Motor neuron (in vitro differentiated cells): ENCODE measurements at regions of chr6 and their contacts with region 1.

Region 1: GRCh38 chr6:106979427-106979884 is 4.9 kb upstream of the CD24 start:
- ATAC-seq: peak in 5 of 8 experiments; percentile 9 to 66 (median 54)
- H3K4me3 ChIP-seq: no peak overlapping the region
- H3K27ac ChIP-seq: no peak overlapping the region
- H3K4me1 ChIP-seq: no peaks in the 10 kb centered on the region

Region 2: DNA sequence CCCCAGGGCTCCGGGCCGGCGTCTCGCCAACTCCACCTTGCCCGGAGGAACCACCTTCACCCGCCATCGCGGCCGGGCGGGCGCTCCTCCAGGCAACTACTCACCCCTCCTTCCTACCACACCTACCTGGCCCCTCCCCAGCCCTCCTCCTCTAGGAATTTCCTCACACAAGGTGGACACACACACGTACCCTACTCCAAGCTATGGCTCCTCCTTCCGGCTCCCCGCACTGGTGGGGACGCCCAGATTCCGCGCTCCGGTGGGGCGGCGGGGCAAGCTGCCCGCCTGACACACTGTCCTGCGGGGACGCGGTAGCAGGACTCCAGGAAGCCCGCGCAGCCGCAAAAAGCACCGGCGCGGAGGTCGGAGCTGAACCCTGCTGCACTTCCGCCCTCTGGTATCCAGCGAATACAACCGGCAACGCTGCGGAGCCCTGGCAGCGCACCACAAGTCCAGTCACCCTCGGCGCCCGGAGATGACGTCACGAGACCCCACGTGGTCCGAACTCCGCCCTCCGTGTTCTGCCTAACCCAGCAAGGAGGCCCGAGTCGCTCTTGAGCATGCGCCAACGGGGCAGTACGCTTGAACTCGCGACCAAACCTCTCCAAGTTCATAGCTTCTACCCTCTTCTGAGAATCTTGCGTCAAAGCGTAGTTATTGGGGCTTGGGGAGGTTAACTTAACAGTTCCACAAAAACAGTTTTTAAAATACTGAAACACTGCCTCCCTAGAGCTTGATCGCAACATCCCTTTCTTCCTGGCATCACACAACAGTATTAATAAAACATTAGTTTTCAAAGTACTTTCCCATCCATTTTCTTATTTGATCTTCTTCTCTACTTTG is 653.9 kb before region 1 on chr6 and contains the start of gene ATG5:
- in situ Hi-C with region 1: loop called in 3 of 9 experiments (anchors 25 kb)
- ATAC-seq: peak; percentile 90 to 99 (median 98)
- H3K4me3 ChIP-seq: peak within 1 kb of the TSS; percentile 67 to 90 (median 74)
- H3K27ac ChIP-seq: peak within 1 kb of the TSS; percentile 89 to 92
- H3K4me1 ChIP-seq: peaks cover 0 to 9% of the 10 kb centered on the region in 2 donors
- total RNA-seq, gene ATG5: 19.3 to 39.2 (median 28.4) TPM

Region 3: DNA sequence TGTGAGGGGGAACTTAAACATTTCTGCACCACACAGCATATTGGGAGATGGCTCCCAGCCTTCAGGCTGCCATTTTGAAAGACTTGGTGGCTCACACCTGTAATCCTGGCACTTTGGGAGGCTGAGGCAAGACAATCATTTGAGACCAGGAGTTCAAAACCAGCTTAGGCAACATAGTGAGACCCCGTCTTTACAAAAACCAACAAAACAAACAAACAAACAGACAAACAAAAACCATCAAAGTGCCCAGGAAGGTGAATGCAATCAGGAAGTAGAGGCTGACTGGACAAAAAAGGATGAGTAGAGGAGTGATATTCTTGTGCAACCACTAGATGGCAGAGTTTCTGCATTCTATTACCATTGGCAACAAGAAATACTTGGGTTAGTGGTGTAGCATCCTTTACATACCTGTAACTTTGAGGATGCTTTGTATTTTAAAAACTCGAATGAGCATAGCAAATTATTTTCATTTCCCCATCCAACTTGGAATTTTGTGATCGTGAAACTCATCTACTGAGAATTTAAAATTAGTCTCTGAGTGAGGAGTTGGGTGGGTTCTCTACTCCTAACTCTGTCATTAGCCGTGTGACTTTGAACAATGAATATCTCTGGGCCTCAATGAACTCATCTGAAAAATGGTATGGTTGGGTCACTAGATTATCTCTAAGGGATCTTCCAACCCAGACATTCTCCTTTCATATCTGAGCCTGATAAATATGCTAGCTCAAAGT is 534.5 kb before region 1 on chr6:
- in situ Hi-C with region 1: loop called in 5 of 9 experiments (anchors 10 to 25 kb)
- ATAC-seq: peak in 5 of 8 experiments; percentile 44 to 78 (median 71)
- H3K4me3 ChIP-seq: no peak overlapping the region
- H3K27ac ChIP-seq: no peak overlapping the region
- H3K4me1 ChIP-seq: no peaks in the 10 kb centered on the region

Region 4: GRCh38 chr6:106574741-106575458 is 404.6 kb before region 1 on chr6:
- in situ Hi-C with region 1: loop called in 2 of 9 experiments (anchors 25 kb)
- ATAC-seq: peak in 7 of 8 experiments; percentile 90 to 97 (median 94)
- H3K4me3 ChIP-seq: no peak overlapping the region
- H3K27ac ChIP-seq: peak overlapping the region; percentile 35 to 50
- H3K4me1 ChIP-seq: peaks cover 12 to 13% of the 10 kb centered on the region in 2 donors

Region 5: DNA sequence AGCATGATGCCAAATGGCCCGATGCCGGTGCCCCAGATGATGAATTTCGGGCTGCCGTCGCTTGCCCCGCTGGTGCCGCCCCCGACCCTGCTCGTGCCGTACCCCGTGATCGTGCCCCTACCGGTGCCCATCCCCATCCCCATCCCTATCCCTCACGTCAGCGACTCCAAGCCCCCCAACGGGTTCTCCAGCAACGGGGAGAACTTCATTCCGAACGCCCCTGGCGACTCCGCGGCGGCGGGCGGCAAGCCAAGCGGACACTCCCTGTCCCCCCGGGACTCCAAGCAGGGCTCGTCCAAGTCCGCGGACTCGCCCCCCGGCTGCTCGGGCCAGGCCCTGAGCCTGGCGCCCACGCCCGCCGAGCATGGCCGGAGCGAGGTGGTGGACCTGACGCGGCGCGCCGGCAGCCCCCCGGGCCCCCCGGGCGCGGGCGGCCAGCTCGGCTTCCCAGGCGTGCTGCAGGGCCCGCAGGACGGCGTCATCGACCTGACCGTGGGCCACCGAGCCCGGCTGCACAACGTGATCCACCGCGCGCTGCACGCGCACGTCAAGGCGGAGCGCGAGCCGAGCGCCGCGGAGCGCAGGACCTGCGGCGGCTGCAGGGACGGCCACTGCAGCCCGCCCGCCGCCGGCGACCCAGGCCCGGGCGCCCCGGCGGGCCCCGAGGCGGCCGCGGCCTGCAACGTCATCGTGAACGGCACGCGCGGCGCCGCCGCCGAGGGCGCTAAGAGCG is 655.0 kb after region 1 on chr6:
- in situ Hi-C with region 1: no loop called
- ATAC-seq: peak in 1 of 8 experiments; percentile 59
- H3K4me3 ChIP-seq: no peak overlapping the region
- H3K27ac ChIP-seq: no peak overlapping the region
- H3K4me1 ChIP-seq: peaks cover 16 to 29% of the 10 kb centered on the region in 2 donors